ENCODE measurements at regions of chr17 and their contacts with region 1.

Region 1: GRCh38 chr17:44919885-44920564 is 4.7 kb upstream of the GFAP start:
- DNase-seq: peak; percentile 87
- ATAC-seq: peak; percentile 83

Region 2: DNA sequence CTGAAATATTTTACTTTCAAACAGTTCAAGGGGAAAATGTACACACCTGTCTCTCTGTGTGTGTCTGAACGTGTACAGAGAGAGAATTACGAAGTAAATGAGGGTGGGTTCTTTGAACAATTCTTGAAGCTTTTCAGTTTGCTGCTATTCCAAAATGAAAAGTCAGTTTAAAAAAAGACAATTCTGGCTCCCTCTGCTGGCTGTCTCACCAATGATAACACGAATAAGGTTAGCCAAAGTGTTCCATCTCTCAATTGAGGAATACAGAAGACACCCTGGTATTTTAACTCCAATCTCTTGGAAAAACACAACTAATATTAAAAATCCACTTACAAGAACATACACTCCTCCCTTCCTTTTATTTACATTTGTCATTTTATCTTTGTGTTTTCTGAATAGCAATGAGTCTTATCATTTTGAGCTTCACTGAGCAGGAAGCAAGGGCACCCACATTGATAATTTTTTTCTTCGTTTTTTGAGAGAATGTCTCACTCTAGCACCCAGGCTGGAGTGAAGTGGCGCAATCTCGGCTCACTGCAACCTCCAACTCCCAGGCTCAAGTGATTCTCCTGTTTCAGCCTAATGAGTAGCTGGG is 41.3 kb before region 1 on chr17:
- intact Hi-C with region 1: no loop called
- DNase-seq: no peak
- ATAC-seq: peak in 1 of 2 donors; percentile 26

Region 3: GRCh38 chr17:44988044-44988942 is 68.3 kb after region 1 on chr17:
- intact Hi-C with region 1: no loop called
- DNase-seq: no peak
- ATAC-seq: no peak

Region 4: GRCh38 chr17:45021607-45022287 is 101.7 kb after region 1 on chr17:
- intact Hi-C with region 1: loop called (anchors 1 to 2 kb)
- DNase-seq: peak; percentile 76
- ATAC-seq: peak; percentile 81

Region 5: DNA sequence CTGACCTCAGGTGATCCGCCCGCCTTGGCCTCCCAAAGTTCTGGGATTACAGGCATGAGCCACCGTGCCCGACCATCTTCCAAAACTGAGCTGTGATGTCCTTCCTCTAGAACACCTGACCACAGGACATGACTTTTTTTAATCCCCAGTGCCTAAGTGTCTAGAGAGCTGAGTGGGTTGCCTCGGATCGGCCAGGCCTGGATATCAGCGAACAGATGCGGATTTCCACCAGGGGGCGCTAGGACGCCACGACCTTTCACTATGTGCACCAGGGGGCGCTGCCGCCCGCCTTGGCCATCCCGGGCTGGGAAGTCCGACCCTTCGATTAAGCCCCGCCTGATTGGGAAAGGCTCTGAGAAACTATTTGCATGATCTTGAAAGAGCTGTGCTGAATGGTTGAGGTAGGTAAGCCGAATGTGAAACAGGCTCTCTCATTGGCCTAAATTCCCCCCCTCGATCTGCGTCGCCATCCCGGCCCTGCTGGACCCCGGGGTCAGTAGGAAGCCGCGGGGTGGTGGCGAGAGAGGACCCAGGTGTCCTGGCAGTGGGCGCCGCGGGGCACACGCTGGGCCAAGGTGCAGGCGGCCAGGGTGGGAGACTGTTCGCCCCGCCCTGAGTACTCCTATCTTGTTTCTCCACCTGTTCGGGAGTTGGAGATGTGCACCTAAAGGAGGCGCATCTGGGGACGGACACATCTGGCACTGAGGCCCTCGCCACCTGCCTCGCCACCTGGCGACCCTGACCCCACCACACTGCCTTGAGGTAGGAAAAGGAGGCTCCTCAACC is 215.4 kb after region 1 on chr17 and contains the start of gene ACBD4:
- intact Hi-C with region 1: loop called in 1 of 2 experiments (anchors 5 kb)
- DNase-seq: peak; percentile 97
- ATAC-seq: peak; percentile 79 to 80
- total RNA-seq, gene ACBD4: 8.4 to 8.7 TPM

Region 6: DNA sequence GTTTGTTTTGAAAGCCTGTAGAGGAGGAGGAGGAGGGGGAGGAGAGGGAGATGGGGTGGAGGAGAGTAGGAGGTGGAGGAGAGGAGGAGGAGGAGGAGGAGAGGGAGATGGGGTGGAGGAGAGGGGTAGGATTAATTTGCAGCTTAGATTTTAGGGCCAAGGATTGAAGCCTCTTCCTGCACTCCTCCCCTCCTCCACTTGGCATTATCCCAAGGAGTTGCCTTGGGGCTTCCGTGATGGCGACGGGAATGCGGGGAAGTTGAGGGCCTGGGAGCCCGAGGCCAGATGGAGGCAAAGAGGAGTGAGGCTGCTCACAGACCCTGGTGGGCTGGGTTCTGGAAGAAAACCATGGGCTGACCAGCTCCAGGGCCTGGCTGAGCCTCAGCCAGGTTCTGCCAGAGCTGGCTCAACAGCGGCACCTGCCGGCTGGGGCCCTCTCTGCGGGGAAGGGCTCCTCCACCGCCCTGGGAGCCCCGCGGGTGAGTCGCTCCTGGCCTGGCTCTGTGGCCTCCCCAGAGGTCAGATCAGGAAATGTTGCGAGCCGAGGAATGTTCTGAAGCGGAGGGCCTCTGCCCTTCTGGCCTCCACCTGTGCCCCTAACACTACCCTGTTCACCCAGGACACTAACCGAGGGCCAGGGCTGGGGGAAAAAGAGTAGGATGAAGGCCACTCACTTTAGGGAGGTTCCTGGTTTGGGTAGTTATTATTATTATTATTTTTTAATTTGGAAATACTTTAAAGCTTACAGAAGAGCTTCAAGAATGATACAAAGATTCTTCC is 277.7 kb after region 1 on chr17:
- intact Hi-C with region 1: no loop called
- DNase-seq: peak; percentile 94
- ATAC-seq: peak; percentile 97 to 99

Measured in left cardiac atrium (tissue), 4 donors.